Testis (tissue), 5 donors: ENCODE measurements at regions of chr16 and their contacts with region 1.

Region 1: DNA sequence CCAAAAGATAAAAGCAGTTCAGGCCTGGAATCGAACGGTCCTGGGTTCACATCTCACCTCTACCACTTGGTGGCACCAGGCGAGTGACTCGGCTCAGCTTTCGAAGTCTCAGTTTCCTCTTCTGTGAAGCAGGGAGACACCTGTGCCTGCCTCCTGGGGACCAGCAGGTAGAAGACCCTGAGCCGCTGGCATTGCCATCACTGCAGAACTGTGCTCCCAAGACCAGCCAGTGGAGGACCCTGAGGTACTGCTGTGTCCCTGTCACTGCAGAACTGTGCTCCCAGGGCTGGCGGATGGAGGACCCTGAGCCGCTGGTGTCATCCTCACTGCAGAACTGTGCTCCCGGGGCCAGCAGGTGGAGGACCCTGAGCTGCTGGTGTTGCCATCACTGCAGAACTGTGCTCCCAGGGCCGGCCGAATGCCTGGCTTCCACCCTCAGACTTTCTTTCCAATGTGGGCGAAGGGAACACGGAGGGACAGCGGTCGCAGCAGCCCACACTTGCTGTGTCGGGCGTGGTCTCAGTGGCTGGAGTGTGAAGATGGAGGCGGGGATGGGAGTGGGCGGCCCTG is 8.7 kb upstream of the SLC7A5 start:
- DNase-seq: no peak
- H3K4me3 ChIP-seq: no peak overlapping the region
- H3K27ac ChIP-seq: no peak overlapping the region
- H3K4me1 ChIP-seq: peaks cover 37% of the 10 kb centered on the region
- H3K27me3 ChIP-seq: no peaks in the 10 kb centered on the region
- CTCF ChIP-seq: no peak
- POLR2A ChIP-seq: no peak

Region 2: GRCh38 chr16:87780385-87780989 is 97.5 kb before region 1 on chr16:
- intact Hi-C with region 1: loop called (anchors 10 kb)
- DNase-seq: peak; percentile 30
- H3K4me3 ChIP-seq: no peak overlapping the region
- H3K27ac ChIP-seq: no peak overlapping the region
- H3K4me1 ChIP-seq: peaks cover 19% of the 10 kb centered on the region
- H3K27me3 ChIP-seq: no peaks in the 10 kb centered on the region
- CTCF ChIP-seq: no peak
- POLR2A ChIP-seq: no peak

Region 3: DNA sequence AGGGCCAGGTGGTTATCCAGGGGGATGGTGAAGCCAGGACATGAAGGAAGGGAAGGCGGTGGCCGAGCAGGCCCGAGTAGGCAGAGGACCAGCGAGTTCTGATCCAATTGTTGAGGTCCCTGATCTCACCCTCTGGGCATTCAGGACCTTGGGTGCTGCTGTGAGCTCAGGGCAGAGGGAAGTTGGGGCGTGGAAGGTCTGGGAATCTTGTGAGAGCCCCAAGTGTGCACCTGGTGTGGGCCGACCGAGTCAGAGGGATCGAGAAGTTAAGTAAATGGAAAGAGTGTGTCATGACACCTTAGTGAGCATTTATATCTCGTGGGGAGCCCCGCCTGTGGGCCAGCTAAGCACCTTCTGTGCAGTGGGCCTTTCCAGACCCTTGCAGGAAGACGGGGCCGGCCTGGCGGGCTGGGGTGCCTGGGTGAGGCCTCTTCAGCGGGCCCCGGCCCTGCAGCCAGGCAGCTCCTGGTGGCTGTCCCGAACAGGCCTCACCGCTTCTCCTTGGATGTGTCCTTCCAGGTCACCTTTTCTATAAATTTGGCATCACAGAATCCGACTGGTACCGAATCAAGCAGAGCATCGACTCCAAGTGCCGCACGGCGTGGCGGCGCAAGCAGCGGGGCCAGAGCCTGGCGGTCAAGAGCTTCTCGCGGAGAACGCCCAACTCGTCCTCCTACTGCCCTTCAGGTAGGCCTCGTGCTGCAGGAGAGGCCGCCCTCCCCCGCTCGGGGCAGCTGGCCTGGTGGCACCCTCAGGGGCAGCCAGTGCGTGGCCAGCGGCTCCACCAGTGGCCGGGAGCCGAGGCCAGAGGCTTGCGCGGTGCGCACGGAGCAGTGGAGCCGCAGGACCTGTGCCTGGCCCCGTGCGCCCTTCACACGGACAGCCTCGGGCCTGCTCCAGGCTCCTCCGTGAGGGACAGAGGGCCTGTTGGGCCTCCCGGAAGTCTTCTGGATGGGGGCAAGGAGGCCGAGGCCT is 149.2 kb after region 1 on chr16:
- intact Hi-C with region 1: no loop called
- DNase-seq: no peak
- H3K4me3 ChIP-seq: no peak overlapping the region
- H3K27ac ChIP-seq: no peak overlapping the region
- H3K4me1 ChIP-seq: no peaks in the 10 kb centered on the region
- H3K27me3 ChIP-seq: no peaks in the 10 kb centered on the region
- CTCF ChIP-seq: no peak
- POLR2A ChIP-seq: no peak

Region 4: GRCh38 chr16:88039591-88039990 is 161.6 kb after region 1 on chr16:
- intact Hi-C with region 1: no loop called
- DNase-seq: no peak
- H3K4me3 ChIP-seq: no peak overlapping the region
- H3K27ac ChIP-seq: no peak overlapping the region
- H3K4me1 ChIP-seq: no peaks in the 10 kb centered on the region
- H3K27me3 ChIP-seq: no peaks in the 10 kb centered on the region
- CTCF ChIP-seq: no peak
- POLR2A ChIP-seq: no peak